Transverse colon (tissue), 4 donors: ENCODE measurements at regions of chr16 and their contacts with region 1.

Region 1: GRCh38 chr16:52191531-52192134 is 355.3 kb downstream of the TOX3 start:
- DNase-seq: peak; percentile 74
- H3K4me3 ChIP-seq: no peak overlapping the region
- H3K27ac ChIP-seq: no peak overlapping the region
- H3K4me1 ChIP-seq: no peaks in the 10 kb centered on the region
- H3K27me3 ChIP-seq: no peaks in the 10 kb centered on the region
- CTCF ChIP-seq: peak; percentile 93 to 96 (median 93)
- EP300 ChIP-seq: no peak
- POLR2A ChIP-seq: no peak

Region 2: DNA sequence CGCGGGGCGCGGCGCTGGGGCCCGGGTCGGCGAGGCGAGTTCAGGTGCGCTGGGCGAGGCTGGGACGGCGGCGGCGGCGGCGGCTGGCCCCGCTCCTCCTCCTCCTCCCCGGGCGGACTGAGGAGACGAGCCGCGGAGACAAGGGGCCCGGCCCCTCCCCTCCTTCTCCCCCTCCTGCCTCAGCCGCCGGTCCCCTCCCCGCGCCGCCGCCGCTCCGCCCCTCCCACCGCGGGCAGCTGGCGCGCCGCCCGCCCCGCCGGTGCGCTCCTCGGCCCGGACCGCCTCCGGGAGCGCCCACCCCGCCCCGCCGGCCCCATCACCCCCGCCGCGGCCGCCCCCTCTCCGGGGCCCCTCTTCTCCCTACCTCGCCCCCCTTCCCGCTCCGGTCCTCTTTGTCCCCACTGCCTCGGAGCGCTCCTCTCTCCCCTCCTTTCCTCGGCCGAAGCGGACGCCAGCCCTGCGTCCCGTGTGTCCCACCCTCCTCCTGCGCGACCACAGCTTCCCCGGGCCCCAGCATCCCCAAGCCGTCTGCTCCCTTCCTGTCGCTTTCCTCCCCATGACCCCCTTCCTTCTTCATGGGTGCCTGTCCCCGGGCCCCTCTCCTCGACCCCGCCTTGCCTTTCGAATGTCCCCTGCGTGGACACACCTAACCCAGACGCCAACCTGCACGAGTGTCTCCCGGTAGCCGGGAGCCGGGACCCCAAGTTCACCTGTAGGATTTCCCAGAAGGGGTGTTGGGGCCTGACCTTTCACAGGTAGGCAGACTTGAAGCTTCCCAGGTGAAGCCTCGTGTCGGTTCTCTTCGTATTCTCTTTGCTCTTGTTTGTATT is 355.6 kb after region 1 on chr16 and contains the start of gene TOX3:
- in situ Hi-C with region 1: loop called in 1 of 4 experiments (anchors 25 kb)
- intact Hi-C with region 1: no loop called
- DNase-seq: peak; percentile 74
- H3K4me3 ChIP-seq: peak within 1 kb of the TSS; percentile 48 to 83 (median 74)
- H3K27ac ChIP-seq: peak within 1 kb of the TSS; percentile 78 to 92 (median 90)
- H3K4me1 ChIP-seq: peaks cover 0 to 51% (median 7%) of the 10 kb centered on the region in 4 donors
- H3K27me3 ChIP-seq: peaks cover 36% of the 10 kb centered on the region
- CTCF ChIP-seq: no peak
- EP300 ChIP-seq: no peak
- POLR2A ChIP-seq: no peak
- total RNA-seq, gene TOX3: 10.9 to 32.6 (median 28.0) TPM

Region 3: DNA sequence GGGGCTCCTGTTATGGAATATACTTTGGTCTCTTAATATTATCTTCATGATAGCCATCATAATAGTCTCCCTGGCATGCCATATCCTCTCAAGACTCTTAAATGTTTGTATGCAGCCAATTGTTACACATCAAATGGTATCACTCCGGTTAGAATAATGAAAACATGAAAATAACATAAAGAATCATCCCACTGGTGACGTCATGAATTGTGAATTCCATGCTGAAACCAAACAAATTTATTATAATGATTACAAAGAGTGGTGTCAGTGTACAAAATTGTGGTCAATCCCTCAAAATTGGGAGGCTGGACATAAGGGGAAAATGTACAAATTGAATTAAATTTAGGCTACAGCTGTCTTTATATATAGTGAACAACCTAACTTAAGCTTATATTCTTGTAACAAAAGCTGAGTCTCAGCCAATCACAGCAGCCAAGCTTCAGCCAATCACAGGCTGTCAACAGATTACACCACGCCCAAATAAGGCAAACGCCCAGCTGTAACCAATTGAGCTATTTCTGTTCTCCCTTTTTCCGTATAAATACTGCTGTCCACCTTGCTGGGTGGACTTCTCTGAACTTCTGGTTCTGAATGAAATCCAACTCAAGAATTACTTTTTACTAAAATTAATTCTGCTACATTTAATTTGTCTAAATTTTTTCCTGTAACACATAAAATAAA is 705.0 kb after region 1 on chr16:
- in situ Hi-C with region 1: loop called in 2 of 4 experiments (anchors 25 kb)
- intact Hi-C with region 1: no loop called
- DNase-seq: no peak
- H3K4me3 ChIP-seq: no peak overlapping the region
- H3K27ac ChIP-seq: no peak overlapping the region
- H3K4me1 ChIP-seq: no peaks in the 10 kb centered on the region
- H3K27me3 ChIP-seq: peaks cover 5% of the 10 kb centered on the region
- CTCF ChIP-seq: no peak
- EP300 ChIP-seq: no peak
- POLR2A ChIP-seq: no peak

Region 4: DNA sequence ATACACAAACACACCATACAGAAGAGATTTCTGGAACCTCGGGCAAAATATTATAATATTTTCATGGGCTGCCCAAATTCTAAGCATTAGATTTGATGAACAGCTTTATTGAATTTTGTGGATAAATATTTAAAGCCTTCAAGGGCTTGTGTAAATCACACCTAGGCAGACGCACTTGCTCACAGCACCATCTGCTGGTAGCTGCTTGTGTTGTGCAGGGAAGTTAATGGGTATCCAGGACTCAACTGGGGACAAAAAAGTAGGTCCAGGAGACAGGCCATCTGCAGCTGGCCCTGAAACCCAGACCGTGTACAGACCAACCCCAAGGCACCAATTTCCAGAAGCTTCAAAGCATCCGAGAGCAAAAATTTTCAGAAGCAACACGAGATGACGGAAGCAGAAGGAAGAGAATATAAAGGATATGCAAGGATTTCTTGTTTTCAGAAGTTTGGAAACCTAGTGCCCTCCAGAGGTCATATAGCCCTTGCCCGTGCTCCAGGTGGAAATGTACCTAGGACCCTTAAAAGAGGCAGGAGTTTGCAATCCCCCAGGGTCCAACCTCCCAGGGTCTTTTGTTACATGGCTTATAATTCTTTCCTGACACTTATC is 721.0 kb after region 1 on chr16:
- in situ Hi-C with region 1: loop called in 2 of 4 experiments (anchors 5 to 25 kb)
- intact Hi-C with region 1: no loop called
- DNase-seq: peak; percentile 75
- H3K4me3 ChIP-seq: no peak overlapping the region
- H3K27ac ChIP-seq: no peak overlapping the region
- H3K4me1 ChIP-seq: no peaks in the 10 kb centered on the region
- H3K27me3 ChIP-seq: no peaks in the 10 kb centered on the region
- CTCF ChIP-seq: peak; percentile 65 to 81 (median 77)
- EP300 ChIP-seq: no peak
- POLR2A ChIP-seq: no peak

Region 5: DNA sequence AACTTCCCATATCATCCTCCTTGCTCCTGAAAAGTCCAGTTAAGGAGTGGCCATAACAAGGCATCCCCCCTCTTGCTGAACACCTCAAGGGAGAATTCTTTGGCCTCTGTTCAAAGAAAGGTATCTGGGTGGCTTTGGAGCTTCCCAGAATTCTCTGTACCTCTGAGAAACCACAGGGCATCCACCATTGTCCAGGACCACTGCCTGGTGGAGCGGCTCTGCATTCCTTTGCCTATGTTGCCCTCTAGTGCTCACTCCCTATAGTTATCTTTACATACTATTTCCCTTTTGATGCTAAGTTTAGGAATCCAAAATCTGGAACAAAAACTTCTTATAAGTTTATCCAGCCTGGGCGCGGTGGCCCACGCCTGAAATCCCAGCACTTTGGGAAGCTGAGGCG is 830.7 kb after region 1 on chr16:
- in situ Hi-C with region 1: loop called in 2 of 4 experiments (anchors 10 to 25 kb)
- intact Hi-C with region 1: no loop called
- DNase-seq: peak; percentile 33
- H3K4me3 ChIP-seq: no peak overlapping the region
- H3K27ac ChIP-seq: no peak overlapping the region
- H3K4me1 ChIP-seq: no peaks in the 10 kb centered on the region
- H3K27me3 ChIP-seq: no peaks in the 10 kb centered on the region
- CTCF ChIP-seq: peak; percentile 47 to 64 (median 49)
- EP300 ChIP-seq: no peak
- POLR2A ChIP-seq: no peak